T-cell (primary cell): ENCODE measurements at regions of chr10 and their contacts with region 1.

Region 1: GRCh38 chr10:119139464-119140067 is 25.9 kb downstream of the SFXN4 start:
- DNase-seq: peak; percentile 7 to 64 (median 38)
- ATAC-seq: peak; percentile 80 to 88 (median 82)
- H3K4me3 ChIP-seq: no peak overlapping the region
- H3K4me3 Mint-ChIP-seq: no peak overlapping the region
- H3K27ac ChIP-seq: no peak overlapping the region
- H3K27ac Mint-ChIP-seq: peak overlapping the region; percentile 53 to 78
- H3K4me1 ChIP-seq: no peaks in the 10 kb centered on the region
- H3K4me1 Mint-ChIP-seq: peaks cover 7 to 11% (median 9%) of the 10 kb centered on the region in 3 donors
- H3K27me3 ChIP-seq: no peaks in the 10 kb centered on the region
- H3K27me3 Mint-ChIP-seq: no peaks in the 10 kb centered on the region

Region 2: GRCh38 chr10:117987244-117987909 is 1152.2 kb before region 1 on chr10:
- CTCF ChIA-PET with region 1: no interaction called
- POLR2A ChIA-PET with region 1: no interaction called
- DNase-seq: no peak
- ATAC-seq: no peak
- H3K4me3 ChIP-seq: no peak overlapping the region
- H3K4me3 Mint-ChIP-seq: no peak overlapping the region
- H3K27ac ChIP-seq: no peak overlapping the region
- H3K27ac Mint-ChIP-seq: no peak overlapping the region
- H3K4me1 ChIP-seq: no peaks in the 10 kb centered on the region
- H3K4me1 Mint-ChIP-seq: no peaks in the 10 kb centered on the region
- H3K27me3 ChIP-seq: no peaks in the 10 kb centered on the region
- H3K27me3 Mint-ChIP-seq: peaks cover 4 to 5% of the 10 kb centered on the region in 2 donors

Region 3: GRCh38 chr10:118939211-118940007 is 200.2 kb before region 1 on chr10:
- CTCF ChIA-PET with region 1: no interaction called
- POLR2A ChIA-PET with region 1: no interaction called
- DNase-seq: no peak
- ATAC-seq: no peak
- H3K4me3 ChIP-seq: no peak overlapping the region
- H3K4me3 Mint-ChIP-seq: no peak overlapping the region
- H3K27ac ChIP-seq: no peak overlapping the region
- H3K27ac Mint-ChIP-seq: no peak overlapping the region
- H3K4me1 ChIP-seq: no peaks in the 10 kb centered on the region
- H3K4me1 Mint-ChIP-seq: no peaks in the 10 kb centered on the region
- H3K27me3 ChIP-seq: peaks cover 2 to 7% of the 10 kb centered on the region in 2 experiments
- H3K27me3 Mint-ChIP-seq: peaks cover 30 to 32% of the 10 kb centered on the region in 2 donors

Region 4: GRCh38 chr10:119090968-119091367 is 48.6 kb before region 1 on chr10:
- CTCF ChIA-PET with region 1: no interaction called
- POLR2A ChIA-PET with region 1: no interaction called
- DNase-seq: peak in 34 of 35 experiments; percentile 7 to 82 (median 42)
- ATAC-seq: peak; percentile 87 to 93 (median 88)
- H3K4me3 ChIP-seq: no peak overlapping the region
- H3K4me3 Mint-ChIP-seq: peak overlapping the region; percentile 53 to 71 (median 57)
- H3K27ac ChIP-seq: peak overlapping the region; percentile 90
- H3K27ac Mint-ChIP-seq: peak overlapping the region; percentile 97 to 100
- H3K4me1 ChIP-seq: peaks cover 4 to 53% of the 10 kb centered on the region in 2 experiments
- H3K4me1 Mint-ChIP-seq: peaks cover 40 to 70% (median 52%) of the 10 kb centered on the region in 3 donors
- H3K27me3 ChIP-seq: no peaks in the 10 kb centered on the region
- H3K27me3 Mint-ChIP-seq: no peaks in the 10 kb centered on the region

Region 5: GRCh38 chr10:119333146-119333792 is 193.7 kb after region 1 on chr10:
- CTCF ChIA-PET with region 1: no interaction called
- POLR2A ChIA-PET with region 1: interaction called in 1 of 2 experiments, 17 read pairs
- DNase-seq: peak in 6 of 35 experiments; percentile 14 to 56 (median 24)
- ATAC-seq: peak in 3 of 4 experiments; percentile 68 to 85 (median 80)
- H3K4me3 ChIP-seq: no peak overlapping the region
- H3K4me3 Mint-ChIP-seq: no peak overlapping the region
- H3K27ac ChIP-seq: no peak overlapping the region
- H3K27ac Mint-ChIP-seq: no peak overlapping the region
- H3K4me1 ChIP-seq: no peaks in the 10 kb centered on the region
- H3K4me1 Mint-ChIP-seq: peaks cover 20 to 30% (median 25%) of the 10 kb centered on the region in 3 donors
- H3K27me3 ChIP-seq: no peaks in the 10 kb centered on the region
- H3K27me3 Mint-ChIP-seq: no peaks in the 10 kb centered on the region

Region 6: GRCh38 chr10:119550827-119551226 is 411.3 kb after region 1 on chr10:
- CTCF ChIA-PET with region 1: no interaction called
- POLR2A ChIA-PET with region 1: interaction called in 1 of 2 experiments, 11 read pairs
- DNase-seq: no peak
- ATAC-seq: no peak
- H3K4me3 ChIP-seq: no peak overlapping the region
- H3K4me3 Mint-ChIP-seq: no peak overlapping the region
- H3K27ac ChIP-seq: no peak overlapping the region
- H3K27ac Mint-ChIP-seq: no peak overlapping the region
- H3K4me1 ChIP-seq: no peaks in the 10 kb centered on the region
- H3K4me1 Mint-ChIP-seq: peaks cover 0 to 2% (median 0%) of the 10 kb centered on the region in 3 donors
- H3K27me3 ChIP-seq: peaks cover 0 to 7% of the 10 kb centered on the region in 2 experiments
- H3K27me3 Mint-ChIP-seq: peaks cover 0 to 12% of the 10 kb centered on the region in 2 donors